Lower leg skin (tissue), 4 donors: ENCODE measurements at regions of chr10 and their contacts with region 1.

Region 1: DNA sequence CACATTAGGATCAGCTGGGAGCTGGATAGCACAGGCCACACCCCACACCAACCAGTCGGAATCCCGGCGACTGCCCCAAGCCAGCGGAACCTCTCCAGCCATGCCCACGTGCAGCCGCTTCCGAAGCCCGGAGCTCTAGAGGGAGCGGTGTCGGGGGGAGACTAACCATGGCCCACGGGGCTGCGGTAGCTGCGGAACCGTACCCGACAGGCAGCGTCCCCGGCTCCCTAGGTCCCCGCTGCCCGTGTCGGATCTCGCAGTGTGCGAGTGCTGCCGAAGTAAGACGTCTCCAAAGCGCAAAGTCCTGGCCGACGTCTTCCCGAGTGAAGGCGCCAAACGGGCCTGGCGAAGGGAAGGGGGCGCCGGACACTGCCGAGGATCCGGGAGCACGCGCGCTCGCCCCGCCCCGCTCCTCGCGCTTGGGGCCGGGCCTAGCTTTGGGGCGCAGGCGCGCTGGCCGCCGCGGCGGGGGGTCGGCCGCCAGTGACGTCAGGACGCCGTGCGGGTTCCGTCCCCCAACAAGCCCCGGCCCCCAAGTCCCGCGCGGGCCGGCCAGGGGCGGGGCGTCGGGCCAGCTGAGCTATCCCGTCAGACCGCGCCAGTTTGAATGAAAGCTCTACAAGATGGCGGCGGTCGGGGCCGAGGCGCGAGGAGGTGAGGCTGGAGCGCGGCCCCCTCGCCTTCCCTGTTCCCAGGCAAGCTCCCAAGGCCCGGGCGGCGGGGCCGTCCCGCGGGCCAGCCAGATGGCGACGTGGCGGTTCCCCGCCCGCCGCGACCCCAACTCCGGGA is at the start of gene SUV39H2:
- DNase-seq: peak; percentile 92 to 99
- H3K4me3 ChIP-seq: peak within 1 kb of the TSS; percentile 100
- CTCF ChIP-seq: no peak
- POLR2A ChIP-seq: no peak
- total RNA-seq, gene SUV39H2: 0.99 to 5.3 (median 3.5) TPM

Region 2: GRCh38 chr10:14801723-14802122 is 76.7 kb before region 1 on chr10:
- intact Hi-C with region 1: no loop called
- DNase-seq: no peak
- H3K4me3 ChIP-seq: no peak overlapping the region
- CTCF ChIP-seq: no peak
- POLR2A ChIP-seq: no peak

Region 3: DNA sequence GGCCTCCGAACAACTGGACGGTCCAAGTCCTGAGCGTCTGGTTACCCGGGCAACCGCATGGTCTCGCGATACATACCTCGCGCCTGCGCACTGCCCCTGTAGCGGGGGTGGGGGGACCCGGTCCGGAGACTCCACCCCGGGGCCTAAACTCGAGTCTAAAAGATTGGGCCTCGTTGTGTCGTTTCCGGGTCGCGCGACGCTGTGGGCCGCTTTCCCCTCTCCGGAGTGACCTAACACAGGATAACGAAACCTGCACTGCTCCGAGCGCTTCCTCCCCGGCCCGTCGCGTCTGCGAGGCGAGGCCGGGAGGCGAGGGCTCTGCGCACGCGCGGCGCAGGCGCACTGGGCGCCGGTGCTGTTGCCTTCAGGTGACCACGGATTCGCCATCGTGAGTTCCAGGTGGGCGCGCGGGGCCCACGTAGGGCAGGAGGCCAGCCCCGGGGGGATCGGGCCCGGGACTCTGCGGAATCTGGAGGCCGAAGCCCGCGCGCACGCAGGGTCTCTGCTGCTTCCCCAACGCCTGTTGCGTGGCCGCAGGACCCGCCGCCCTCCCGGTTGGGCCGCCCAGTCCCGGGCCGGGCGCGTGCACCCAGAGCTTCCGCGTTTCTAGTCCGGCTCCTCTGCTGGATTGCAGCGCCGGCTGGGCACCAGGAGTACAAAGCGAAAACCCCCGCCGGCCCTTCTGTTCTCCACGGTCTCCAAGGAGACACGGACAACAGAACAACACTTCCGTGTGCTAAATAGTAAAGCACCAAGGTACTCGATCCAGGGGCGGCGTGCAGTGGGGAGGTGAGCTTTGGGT is 218.8 kb after region 1 on chr10 and contains the start of gene RPP38:
- intact Hi-C with region 1: loop called (anchors 10 kb)
- DNase-seq: peak; percentile 93 to 99
- H3K4me3 ChIP-seq: peak within 1 kb of the TSS; percentile 84
- CTCF ChIP-seq: no peak
- POLR2A ChIP-seq: no peak
- total RNA-seq, gene RPP38: 12.6 to 14.9 (median 14.3) TPM

Region 4: DNA sequence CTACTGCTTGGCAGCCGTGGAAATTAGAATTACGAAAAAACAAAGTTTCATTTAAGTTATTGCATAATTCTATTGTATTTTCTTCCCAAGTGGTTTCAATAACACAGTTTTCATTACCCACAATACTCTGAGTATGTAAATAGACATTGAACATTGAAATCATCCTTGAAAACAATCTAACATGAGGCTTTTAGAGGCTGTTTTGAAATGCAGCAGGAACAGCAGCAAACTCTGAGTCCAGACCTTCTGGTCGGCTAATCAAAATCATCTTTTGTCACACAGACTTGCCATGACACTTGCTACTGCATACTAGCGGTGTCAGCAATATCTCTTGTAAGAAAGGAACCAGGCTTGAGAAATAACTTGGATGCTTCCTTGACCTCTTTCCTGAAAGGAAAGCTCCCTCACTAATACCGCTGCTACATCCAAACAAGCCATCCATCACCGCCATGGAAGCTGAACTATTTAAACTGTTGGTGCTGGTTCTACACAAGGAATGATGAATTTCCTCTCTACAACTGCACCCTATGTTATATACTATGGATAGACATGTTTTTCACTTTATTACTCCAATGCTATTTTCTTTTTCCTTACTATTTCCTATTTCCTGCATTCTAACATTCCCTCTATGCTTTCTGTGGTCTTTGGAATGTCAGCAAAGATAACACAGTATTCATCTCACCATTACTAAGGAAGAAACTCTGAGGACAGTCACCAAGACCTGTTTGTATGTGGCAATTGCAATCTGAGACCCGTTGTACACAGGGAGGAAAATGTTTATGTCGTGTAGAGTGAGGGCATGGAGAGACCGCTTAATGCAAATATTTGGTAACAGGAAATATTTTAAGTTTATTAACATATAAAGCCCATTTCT is 710.4 kb after region 1 on chr10:
- intact Hi-C with region 1: no loop called
- DNase-seq: no peak
- H3K4me3 ChIP-seq: no peak overlapping the region
- CTCF ChIP-seq: no peak
- POLR2A ChIP-seq: no peak